Heart left ventricle (tissue), 16 donors: ENCODE measurements at regions of chr12 and their contacts with region 1.

Region 1: DNA sequence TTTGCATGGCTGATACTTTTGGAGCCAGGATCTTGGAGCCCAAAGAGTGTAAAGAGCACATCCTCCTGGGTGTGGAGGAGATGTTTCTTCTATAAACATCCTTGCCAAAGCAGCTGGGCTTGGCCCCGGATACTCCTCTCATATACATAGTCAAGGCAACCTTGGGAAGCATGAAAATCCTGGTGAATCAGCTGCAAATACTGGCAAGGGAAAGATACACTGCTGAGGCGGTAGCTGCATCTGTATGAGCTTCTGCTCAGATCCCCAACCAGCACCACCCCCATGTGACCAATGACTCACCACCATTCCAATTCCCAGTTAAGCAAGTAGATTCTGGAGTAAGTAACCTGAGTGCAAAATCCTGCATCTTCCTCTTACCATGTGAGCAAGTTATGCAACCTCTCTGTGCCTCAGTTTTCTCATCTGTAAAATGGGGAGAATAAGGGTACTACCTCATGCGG is 567.4 kb downstream of the MED13L start:
- DNase-seq: peak in 4 of 5 donors; percentile 27 to 52 (median 34)
- ATAC-seq: peak in 3 of 4 donors; percentile 37 to 81 (median 81)
- H3K4me3 ChIP-seq: no peak overlapping the region
- H3K27ac ChIP-seq: peak overlapping the region in 3 of 12 donors; percentile 15 to 48 (median 35)
- H3K4me1 ChIP-seq: peaks cover 0 to 25% (median 12%) of the 10 kb centered on the region in 12 donors
- H3K27me3 ChIP-seq: peaks cover 0 to 4% (median 0%) of the 10 kb centered on the region in 9 donors
- CTCF ChIP-seq: no peak
- POLR2A ChIP-seq: no peak

Region 2: DNA sequence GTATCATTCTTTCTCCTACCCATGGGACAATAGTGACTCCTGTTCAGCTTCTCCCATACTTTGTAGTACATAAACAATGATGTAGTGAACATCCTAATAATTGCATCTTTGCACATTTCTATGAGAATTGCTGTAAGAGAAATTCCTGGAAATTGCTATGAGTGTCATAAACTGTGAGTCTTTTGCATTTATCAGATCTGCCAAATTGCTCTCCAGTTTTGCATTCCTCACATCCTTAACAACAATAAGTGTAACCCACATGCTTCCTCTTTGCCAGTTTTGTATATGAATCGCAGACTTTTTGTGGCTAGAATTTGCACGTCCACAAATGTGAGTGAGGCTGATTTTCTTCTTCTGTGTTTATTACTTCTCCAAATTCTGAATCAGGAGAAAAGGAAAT is 1180.2 kb before region 1 on chr12:
- intact Hi-C with region 1: loop called in 1 of 10 experiments (anchors 10 kb)
- DNase-seq: no peak
- ATAC-seq: no peak
- H3K4me3 ChIP-seq: no peak overlapping the region
- H3K27ac ChIP-seq: no peak overlapping the region
- H3K4me1 ChIP-seq: no peaks in the 10 kb centered on the region
- H3K27me3 ChIP-seq: peaks cover 0 to 30% (median 0%) of the 10 kb centered on the region in 9 donors
- CTCF ChIP-seq: no peak
- POLR2A ChIP-seq: no peak